Caco-2 (cell line): ENCODE measurements at regions of chr12 and their contacts with region 1.

Region 1: DNA sequence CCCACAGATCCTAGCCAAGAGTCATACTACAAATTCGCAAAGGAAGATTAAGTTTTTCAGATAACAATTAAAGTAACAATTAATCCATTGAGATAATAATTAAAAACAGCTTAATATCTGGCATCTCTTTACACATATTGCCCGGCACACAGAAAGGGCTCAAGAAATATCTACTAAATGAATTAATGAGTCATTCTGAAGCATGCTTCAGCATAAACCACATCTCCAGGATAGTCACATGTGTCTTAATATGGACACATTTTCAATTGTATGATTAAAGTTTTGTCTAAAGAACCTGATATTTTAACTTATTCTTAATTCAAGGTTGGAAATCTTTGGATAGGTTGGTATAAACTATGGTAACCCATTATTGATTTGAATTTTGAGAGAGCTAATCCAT is 9.6 kb downstream of the ITPR2 start:
- DNase-seq: no peak
- H3K4me3 ChIP-seq: no peak overlapping the region
- H3K4me3 Mint-ChIP-seq: no peak overlapping the region
- H3K27ac Mint-ChIP-seq: no peak overlapping the region
- H3K4me1 ChIP-seq: peaks cover 19% of the 10 kb centered on the region
- H3K4me1 Mint-ChIP-seq: peaks cover 7% of the 10 kb centered on the region
- H3K27me3 ChIP-seq: no peaks in the 10 kb centered on the region
- H3K27me3 Mint-ChIP-seq: no peaks in the 10 kb centered on the region
- CTCF ChIP-seq: no peak

Region 2: GRCh38 chr12:26748741-26749431 is 74.5 kb before region 1 on chr12:
- CTCF ChIA-PET with region 1: no interaction called
- POLR2A ChIA-PET with region 1: no interaction called
- intact Hi-C with region 1: no loop called
- DNase-seq: no peak
- H3K4me3 ChIP-seq: no peak overlapping the region
- H3K4me3 Mint-ChIP-seq: no peak overlapping the region
- H3K27ac Mint-ChIP-seq: no peak overlapping the region
- H3K4me1 ChIP-seq: peaks cover 25% of the 10 kb centered on the region
- H3K4me1 Mint-ChIP-seq: peaks cover 16% of the 10 kb centered on the region
- H3K27me3 ChIP-seq: no peaks in the 10 kb centered on the region
- H3K27me3 Mint-ChIP-seq: no peaks in the 10 kb centered on the region
- CTCF ChIP-seq: no peak

Region 3: DNA sequence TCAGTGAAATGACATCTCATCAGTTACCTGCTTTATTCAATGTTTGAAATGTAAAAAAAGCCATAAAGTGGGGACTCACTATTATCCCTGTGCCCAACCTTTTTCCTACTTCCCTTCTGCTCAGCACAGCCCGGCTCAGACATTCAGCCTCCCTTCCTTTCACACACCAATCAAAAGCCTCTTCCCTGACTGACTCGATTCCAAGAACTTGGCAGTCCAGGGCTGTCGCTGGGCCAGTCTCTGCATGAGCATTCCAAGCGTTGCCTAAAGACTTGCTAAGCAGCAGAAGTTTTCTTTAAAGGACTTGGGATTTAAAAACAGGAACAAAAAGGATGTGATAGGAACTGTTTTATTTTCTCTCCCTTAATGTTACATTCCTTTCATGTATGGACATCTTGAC is 13.1 kb before region 1 on chr12:
- CTCF ChIA-PET with region 1: no interaction called
- POLR2A ChIA-PET with region 1: no interaction called
- intact Hi-C with region 1: no loop called
- DNase-seq: no peak
- H3K4me3 ChIP-seq: no peak overlapping the region
- H3K4me3 Mint-ChIP-seq: no peak overlapping the region
- H3K27ac Mint-ChIP-seq: no peak overlapping the region
- H3K4me1 ChIP-seq: peaks cover 12% of the 10 kb centered on the region
- H3K4me1 Mint-ChIP-seq: peaks cover 14% of the 10 kb centered on the region
- H3K27me3 ChIP-seq: no peaks in the 10 kb centered on the region
- H3K27me3 Mint-ChIP-seq: no peaks in the 10 kb centered on the region
- CTCF ChIP-seq: no peak

Region 4: DNA sequence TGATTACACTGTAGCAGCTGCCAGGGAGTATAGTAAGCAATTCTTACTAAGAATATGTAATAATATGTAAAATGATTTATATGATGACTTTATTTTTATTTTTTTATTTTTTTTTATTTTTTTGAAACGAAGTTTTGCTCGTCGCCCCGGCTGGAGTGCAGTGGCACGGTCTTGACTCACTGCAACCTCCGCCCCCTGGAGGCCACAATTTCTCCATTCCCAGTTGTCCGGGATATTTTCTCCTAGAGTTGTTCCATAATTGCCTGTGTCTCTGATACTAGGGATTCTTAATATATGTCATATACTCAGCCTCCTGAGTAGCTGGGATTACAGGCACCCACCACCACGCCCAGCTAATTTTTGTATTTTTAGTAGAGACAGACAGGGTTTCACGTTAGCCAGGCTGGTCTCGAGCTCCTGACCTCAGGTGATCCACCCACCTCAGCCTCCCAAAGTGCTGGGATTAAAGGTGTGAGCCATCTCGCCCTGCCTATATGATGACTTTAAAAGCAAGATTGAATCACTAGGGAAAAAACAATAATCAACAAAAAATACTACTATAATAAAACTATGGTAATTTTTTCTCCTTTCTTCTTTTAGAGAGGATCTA is 21.8 kb after region 1 on chr12:
- CTCF ChIA-PET with region 1: no interaction called
- POLR2A ChIA-PET with region 1: no interaction called
- intact Hi-C with region 1: loop called (anchors 1 kb)
- DNase-seq: peak; percentile 67 to 84
- H3K4me3 ChIP-seq: no peak overlapping the region
- H3K4me3 Mint-ChIP-seq: no peak overlapping the region
- H3K27ac Mint-ChIP-seq: no peak overlapping the region
- H3K4me1 ChIP-seq: peaks cover 14% of the 10 kb centered on the region
- H3K4me1 Mint-ChIP-seq: peaks cover 22% of the 10 kb centered on the region
- H3K27me3 ChIP-seq: no peaks in the 10 kb centered on the region
- H3K27me3 Mint-ChIP-seq: no peaks in the 10 kb centered on the region
- CTCF ChIP-seq: peak; percentile 87 to 91

Region 5: GRCh38 chr12:26857465-26858176 is 34.2 kb after region 1 on chr12:
- CTCF ChIA-PET with region 1: no interaction called
- POLR2A ChIA-PET with region 1: no interaction called
- intact Hi-C with region 1: no loop called
- DNase-seq: peak in 1 of 2 experiments; percentile 39
- H3K4me3 ChIP-seq: no peak overlapping the region
- H3K4me3 Mint-ChIP-seq: no peak overlapping the region
- H3K27ac Mint-ChIP-seq: no peak overlapping the region
- H3K4me1 ChIP-seq: peaks cover 6% of the 10 kb centered on the region; the same call in 1 of the 2 replicates
- H3K4me1 Mint-ChIP-seq: no peaks in the 10 kb centered on the region
- H3K27me3 ChIP-seq: peaks cover 1% of the 10 kb centered on the region; the same call in 1 of the 2 replicates
- H3K27me3 Mint-ChIP-seq: no peaks in the 10 kb centered on the region
- CTCF ChIP-seq: no peak